ENCODE measurements at regions of chr2 and their contacts with region 1.

Region 1: DNA sequence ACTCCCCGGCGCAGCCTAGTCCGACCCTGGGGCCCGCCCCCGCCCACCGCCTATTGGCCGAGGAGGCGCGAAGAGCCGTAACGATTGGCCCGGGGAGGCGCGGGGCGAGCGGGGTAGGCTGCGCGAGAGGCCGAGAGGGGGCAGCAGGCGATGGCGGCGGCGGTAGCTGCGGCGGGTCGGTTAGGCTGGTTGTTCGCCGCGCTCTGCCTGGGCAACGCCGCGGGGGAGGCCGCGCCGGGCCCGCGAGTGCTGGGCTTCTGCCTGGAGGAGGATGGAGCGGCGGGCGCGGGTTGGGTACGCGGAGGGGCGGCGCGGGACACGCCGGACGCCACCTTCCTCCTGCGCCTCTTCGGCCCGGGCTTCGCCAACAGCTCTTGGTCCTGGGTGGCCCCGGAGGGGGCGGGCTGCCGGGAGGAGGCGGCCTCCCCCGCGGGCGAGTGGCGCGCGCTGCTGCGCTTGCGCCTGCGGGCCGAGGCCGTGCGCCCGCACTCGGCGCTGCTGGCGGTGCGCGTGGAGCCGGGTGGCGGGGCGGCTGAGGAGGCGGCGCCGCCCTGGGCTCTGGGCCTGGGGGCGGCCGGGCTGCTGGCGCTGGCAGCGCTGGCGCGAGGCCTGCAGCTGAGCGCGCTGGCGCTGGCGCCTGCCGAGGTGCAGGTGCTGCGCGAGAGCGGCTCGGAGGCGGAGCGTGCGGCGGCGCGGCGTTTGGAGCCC is at the start of gene CNNM3:
- DNase-seq: peak; percentile 89 to 99 (median 93)
- ATAC-seq: peak; percentile 96
- H3K4me3 ChIP-seq: peak within 1 kb of the TSS; percentile 74
- H3K4me3 Mint-ChIP-seq: peak within 1 kb of the TSS; percentile 86 to 96 (median 92)
- H3K27ac ChIP-seq: peak within 1 kb of the TSS; percentile 79
- H3K27ac Mint-ChIP-seq: peak within 1 kb of the TSS; percentile 75 to 96 (median 86)
- H3K4me1 ChIP-seq: peaks cover 37 to 43% of the 10 kb centered on the region in 2 donors
- H3K4me1 Mint-ChIP-seq: peaks cover 36 to 62% (median 58%) of the 10 kb centered on the region in 7 donors
- H3K27me3 ChIP-seq: no peaks in the 10 kb centered on the region
- H3K27me3 Mint-ChIP-seq: no peaks in the 10 kb centered on the region
- total RNA-seq, gene CNNM3: 32.1 to 51.5 (median 44.6) TPM

Region 2: GRCh38 chr2:96145036-96145847 is 671.0 kb before region 1 on chr2 and contains the start of gene DUSP2:
- CTCF ChIA-PET with region 1: no interaction called
- POLR2A ChIA-PET with region 1: no interaction called
- intact Hi-C with region 1: loop called in 1 of 2 experiments (anchors 5 kb)
- DNase-seq: peak; percentile 79 to 97 (median 83)
- ATAC-seq: peak; percentile 61
- H3K4me3 ChIP-seq: peak within 1 kb of the TSS; percentile 69
- H3K4me3 Mint-ChIP-seq: peak within 1 kb of the TSS; percentile 90 to 98 (median 95)
- H3K27ac ChIP-seq: peak within 1 kb of the TSS; percentile 99
- H3K27ac Mint-ChIP-seq: peak within 1 kb of the TSS; percentile 96 to 100 (median 99)
- H3K4me1 ChIP-seq: peaks cover 50 to 52% of the 10 kb centered on the region in 2 donors
- H3K4me1 Mint-ChIP-seq: peaks cover 35 to 69% (median 62%) of the 10 kb centered on the region in 7 donors
- H3K27me3 ChIP-seq: no peaks in the 10 kb centered on the region
- H3K27me3 Mint-ChIP-seq: no peaks in the 10 kb centered on the region
- total RNA-seq, gene DUSP2: 22.1 to 255 (median 50.3) TPM

Region 3: GRCh38 chr2:96305091-96305978 is 510.9 kb before region 1 on chr2 and contains the start of gene SNRNP200:
- CTCF ChIA-PET with region 1: no interaction called
- POLR2A ChIA-PET with region 1: no interaction called
- intact Hi-C with region 1: loop called in 1 of 2 experiments (anchors 1 kb)
- DNase-seq: peak; percentile 77 to 92 (median 90)
- ATAC-seq: peak; percentile 96
- H3K4me3 ChIP-seq: peak within 1 kb of the TSS; percentile 85
- H3K4me3 Mint-ChIP-seq: peak within 1 kb of the TSS; percentile 94 to 100 (median 99)
- H3K27ac ChIP-seq: peak within 1 kb of the TSS; percentile 94
- H3K27ac Mint-ChIP-seq: peak within 1 kb of the TSS; percentile 97 to 100 (median 99)
- H3K4me1 ChIP-seq: peaks cover 30 to 41% of the 10 kb centered on the region in 2 donors
- H3K4me1 Mint-ChIP-seq: peaks cover 41 to 61% (median 58%) of the 10 kb centered on the region in 7 donors
- H3K27me3 ChIP-seq: no peaks in the 10 kb centered on the region
- H3K27me3 Mint-ChIP-seq: no peaks in the 10 kb centered on the region
- total RNA-seq, gene SNRNP200: 165 to 255 (median 212) TPM

Region 4: GRCh38 chr2:96523659-96524481 is 292.4 kb before region 1 on chr2:
- CTCF ChIA-PET with region 1: no interaction called
- POLR2A ChIA-PET with region 1: no interaction called
- intact Hi-C with region 1: no loop called
- DNase-seq: peak in 1 of 9 donors; percentile 3
- ATAC-seq: no peak
- H3K4me3 ChIP-seq: peak overlapping the region; percentile 21
- H3K4me3 Mint-ChIP-seq: peak overlapping the region in 1 of 10 donors; percentile 74
- H3K27ac ChIP-seq: no peak overlapping the region
- H3K27ac Mint-ChIP-seq: peak overlapping the region in 1 of 9 donors; percentile 82
- H3K4me1 ChIP-seq: peaks cover 21 to 29% of the 10 kb centered on the region in 2 donors
- H3K4me1 Mint-ChIP-seq: peaks cover 12 to 74% (median 20%) of the 10 kb centered on the region in 7 donors
- H3K27me3 ChIP-seq: no peaks in the 10 kb centered on the region
- H3K27me3 Mint-ChIP-seq: no peaks in the 10 kb centered on the region

Region 5: GRCh38 chr2:96773922-96774321 is 42.4 kb before region 1 on chr2:
- CTCF ChIA-PET with region 1: no interaction called
- POLR2A ChIA-PET with region 1: interaction called, 17 read pairs
- intact Hi-C with region 1: no loop called
- DNase-seq: peak in 8 of 9 donors; percentile 35 to 66 (median 54)
- ATAC-seq: peak; percentile 73
- H3K4me3 ChIP-seq: peak overlapping the region; percentile 62
- H3K4me3 Mint-ChIP-seq: peak overlapping the region; percentile 84 to 95 (median 93)
- H3K27ac ChIP-seq: peak overlapping the region; percentile 70
- H3K27ac Mint-ChIP-seq: peak overlapping the region; percentile 88 to 97 (median 93)
- H3K4me1 ChIP-seq: peaks cover 11 to 12% of the 10 kb centered on the region in 2 donors
- H3K4me1 Mint-ChIP-seq: peaks cover 9 to 30% (median 22%) of the 10 kb centered on the region in 7 donors
- H3K27me3 ChIP-seq: no peaks in the 10 kb centered on the region
- H3K27me3 Mint-ChIP-seq: no peaks in the 10 kb centered on the region

Region 6: GRCh38 chr2:96839293-96839874 is 23.1 kb after region 1 on chr2:
- CTCF ChIA-PET with region 1: interaction called, 5 read pairs
- POLR2A ChIA-PET with region 1: interaction called, 48 read pairs
- intact Hi-C with region 1: loop called (anchors 1 to 2 kb)
- DNase-seq: peak; percentile 69 to 84 (median 80)
- ATAC-seq: peak; percentile 98
- H3K4me3 ChIP-seq: peak overlapping the region; percentile 56
- H3K4me3 Mint-ChIP-seq: peak overlapping the region; percentile 48 to 84 (median 73)
- H3K27ac ChIP-seq: peak overlapping the region; percentile 53
- H3K27ac Mint-ChIP-seq: peak overlapping the region; percentile 34 to 92 (median 83)
- H3K4me1 ChIP-seq: peaks cover 12 to 16% of the 10 kb centered on the region in 2 donors
- H3K4me1 Mint-ChIP-seq: peaks cover 0 to 30% (median 18%) of the 10 kb centered on the region in 7 donors
- H3K27me3 ChIP-seq: no peaks in the 10 kb centered on the region
- H3K27me3 Mint-ChIP-seq: no peaks in the 10 kb centered on the region

Region 7: DNA sequence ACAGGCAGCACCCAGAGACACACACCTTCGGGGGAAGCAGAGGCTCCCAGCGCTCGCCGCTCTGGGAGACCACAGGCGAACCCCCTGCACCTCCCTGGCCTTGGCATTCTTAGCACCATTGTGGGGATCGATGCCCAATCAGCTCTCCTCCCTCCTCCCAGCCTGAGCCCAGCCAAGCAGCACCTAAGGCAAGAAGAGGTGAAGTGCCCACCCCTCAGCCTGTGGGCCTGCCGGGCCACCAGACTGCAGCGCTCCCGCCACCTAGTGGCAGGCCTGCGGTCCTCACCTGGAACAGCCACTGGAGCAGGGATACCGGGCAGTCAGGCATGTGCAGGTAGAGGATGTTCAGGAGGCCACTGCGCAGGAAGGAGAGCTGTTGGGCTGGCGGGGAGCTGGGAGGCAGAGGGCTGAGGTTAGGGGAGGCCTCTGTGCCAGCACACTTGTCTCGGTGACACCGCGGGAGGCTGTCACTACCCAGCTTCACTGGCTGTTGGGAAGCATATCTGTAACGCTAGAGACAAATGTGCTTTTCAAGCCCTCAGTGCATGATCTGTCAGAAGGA is 134.9 kb after region 1 on chr2:
- CTCF ChIA-PET with region 1: interaction called, 3 read pairs
- POLR2A ChIA-PET with region 1: no interaction called
- intact Hi-C with region 1: loop called (anchors 1 kb)
- DNase-seq: peak; percentile 68 to 85 (median 80)
- ATAC-seq: peak; percentile 93
- H3K4me3 ChIP-seq: no peak overlapping the region
- H3K4me3 Mint-ChIP-seq: peak overlapping the region in 1 of 10 donors; percentile 61
- H3K27ac ChIP-seq: no peak overlapping the region
- H3K27ac Mint-ChIP-seq: peak overlapping the region in 6 of 9 donors; percentile 26 to 80 (median 61)
- H3K4me1 ChIP-seq: peaks cover 13 to 14% of the 10 kb centered on the region in 2 donors
- H3K4me1 Mint-ChIP-seq: peaks cover 14 to 40% (median 20%) of the 10 kb centered on the region in 7 donors
- H3K27me3 ChIP-seq: no peaks in the 10 kb centered on the region
- H3K27me3 Mint-ChIP-seq: peaks cover 0 to 2% (median 0%) of the 10 kb centered on the region in 5 donors

Measured in naive thymus-derived CD4-positive, alpha-beta T cell (primary cell).